Naive thymus-derived CD4-positive, alpha-beta T cell (primary cell): ENCODE measurements at regions of chr11 and their contacts with region 1.

Region 1: DNA sequence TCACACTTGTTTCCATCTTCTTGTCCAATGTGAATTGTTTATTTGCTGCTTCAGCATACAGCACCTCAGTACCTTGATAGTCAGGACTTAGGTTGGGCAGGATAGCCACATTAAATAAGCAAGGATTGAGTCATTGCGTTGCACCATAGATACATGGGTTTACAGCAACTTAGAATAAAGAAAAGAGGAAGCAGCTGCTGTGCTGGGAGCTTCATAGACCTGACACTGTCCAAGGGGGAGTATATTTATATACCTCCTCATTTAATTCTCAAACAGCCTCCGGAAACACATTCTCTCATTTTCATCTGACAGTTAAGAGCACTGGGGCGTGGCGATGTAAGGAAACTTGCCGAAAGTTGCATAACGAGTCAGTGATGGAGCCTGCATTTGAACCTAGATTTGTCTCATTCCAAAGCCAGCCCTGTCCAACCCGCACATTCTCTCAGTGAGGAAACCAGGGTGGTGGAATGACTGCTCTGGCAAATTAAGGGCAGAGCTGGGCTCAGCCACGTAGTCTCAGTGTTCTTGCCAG is 42.2 kb downstream of the UBASH3B start:
- DNase-seq: peak in 7 of 9 donors; percentile 53 to 78 (median 69)
- ATAC-seq: peak; percentile 85
- H3K4me3 ChIP-seq: peak overlapping the region; percentile 33
- H3K4me3 Mint-ChIP-seq: peak overlapping the region; percentile 61 to 93 (median 82)
- H3K27ac ChIP-seq: peak overlapping the region; percentile 75
- H3K27ac Mint-ChIP-seq: peak overlapping the region; percentile 88 to 99 (median 96)
- H3K4me1 ChIP-seq: peaks cover 34 to 62% of the 10 kb centered on the region in 2 donors
- H3K4me1 Mint-ChIP-seq: peaks cover 53 to 99% (median 88%) of the 10 kb centered on the region in 7 donors
- H3K27me3 ChIP-seq: no peaks in the 10 kb centered on the region
- H3K27me3 Mint-ChIP-seq: peaks cover 0 to 3% (median 0%) of the 10 kb centered on the region in 5 donors

Region 2: GRCh38 chr11:122628810-122629555 is 68.7 kb before region 1 on chr11:
- CTCF ChIA-PET with region 1: interaction called, 3 read pairs
- POLR2A ChIA-PET with region 1: no interaction called
- intact Hi-C with region 1: loop called (anchors 2 to 10 kb)
- DNase-seq: peak; percentile 46 to 70 (median 62)
- ATAC-seq: peak; percentile 93
- H3K4me3 ChIP-seq: no peak overlapping the region
- H3K4me3 Mint-ChIP-seq: no peak overlapping the region
- H3K27ac ChIP-seq: no peak overlapping the region
- H3K27ac Mint-ChIP-seq: peak overlapping the region in 4 of 9 donors; percentile 18 to 49 (median 24)
- H3K4me1 ChIP-seq: no peaks in the 10 kb centered on the region
- H3K4me1 Mint-ChIP-seq: peaks cover 0 to 30% (median 16%) of the 10 kb centered on the region in 7 donors
- H3K27me3 ChIP-seq: no peaks in the 10 kb centered on the region
- H3K27me3 Mint-ChIP-seq: peaks cover 0 to 16% (median 0%) of the 10 kb centered on the region in 5 donors

Region 3: GRCh38 chr11:122668562-122669090 is 29.1 kb before region 1 on chr11:
- CTCF ChIA-PET with region 1: interaction called, 29 read pairs
- POLR2A ChIA-PET with region 1: interaction called, 64 read pairs
- intact Hi-C with region 1: no loop called
- DNase-seq: peak in 6 of 9 donors; percentile 22 to 68 (median 52)
- ATAC-seq: peak; percentile 47
- H3K4me3 ChIP-seq: no peak overlapping the region
- H3K4me3 Mint-ChIP-seq: peak overlapping the region; percentile 9 to 77 (median 62)
- H3K27ac ChIP-seq: peak overlapping the region; percentile 55
- H3K27ac Mint-ChIP-seq: peak overlapping the region in 8 of 9 donors; percentile 79 to 99 (median 90)
- H3K4me1 ChIP-seq: peaks cover 45 to 53% of the 10 kb centered on the region in 2 donors
- H3K4me1 Mint-ChIP-seq: peaks cover 36 to 91% (median 77%) of the 10 kb centered on the region in 7 donors
- H3K27me3 ChIP-seq: no peaks in the 10 kb centered on the region
- H3K27me3 Mint-ChIP-seq: peaks cover 0 to 9% (median 0%) of the 10 kb centered on the region in 5 donors

Region 4: GRCh38 chr11:122711831-122712381 is 14.2 kb after region 1 on chr11:
- CTCF ChIA-PET with region 1: no interaction called
- POLR2A ChIA-PET with region 1: interaction called, 17 read pairs
- intact Hi-C with region 1: no loop called
- DNase-seq: no peak
- ATAC-seq: no peak
- H3K4me3 ChIP-seq: no peak overlapping the region
- H3K4me3 Mint-ChIP-seq: no peak overlapping the region
- H3K27ac ChIP-seq: no peak overlapping the region
- H3K27ac Mint-ChIP-seq: peak overlapping the region in 3 of 9 donors; percentile 45 to 54 (median 46)
- H3K4me1 ChIP-seq: peaks cover 2% of the 10 kb centered on the region in 2 donors
- H3K4me1 Mint-ChIP-seq: peaks cover 15 to 75% (median 64%) of the 10 kb centered on the region in 7 donors
- H3K27me3 ChIP-seq: no peaks in the 10 kb centered on the region
- H3K27me3 Mint-ChIP-seq: peaks cover 0 to 9% (median 0%) of the 10 kb centered on the region in 5 donors

Region 5: GRCh38 chr11:122727101-122727929 is 29.6 kb after region 1 on chr11:
- CTCF ChIA-PET with region 1: interaction called, 13 read pairs
- POLR2A ChIA-PET with region 1: interaction called, 37 read pairs
- intact Hi-C with region 1: loop called (anchors 1 kb)
- DNase-seq: peak in 7 of 9 donors; percentile 33 to 56 (median 48)
- ATAC-seq: peak; percentile 77
- H3K4me3 ChIP-seq: peak overlapping the region; percentile 37
- H3K4me3 Mint-ChIP-seq: peak overlapping the region; percentile 79 to 95 (median 85)
- H3K27ac ChIP-seq: peak overlapping the region; percentile 81
- H3K27ac Mint-ChIP-seq: peak overlapping the region; percentile 88 to 100 (median 97)
- H3K4me1 ChIP-seq: peaks cover 20 to 64% of the 10 kb centered on the region in 2 donors
- H3K4me1 Mint-ChIP-seq: peaks cover 53 to 73% (median 66%) of the 10 kb centered on the region in 7 donors
- H3K27me3 ChIP-seq: no peaks in the 10 kb centered on the region
- H3K27me3 Mint-ChIP-seq: no peaks in the 10 kb centered on the region

Region 6: DNA sequence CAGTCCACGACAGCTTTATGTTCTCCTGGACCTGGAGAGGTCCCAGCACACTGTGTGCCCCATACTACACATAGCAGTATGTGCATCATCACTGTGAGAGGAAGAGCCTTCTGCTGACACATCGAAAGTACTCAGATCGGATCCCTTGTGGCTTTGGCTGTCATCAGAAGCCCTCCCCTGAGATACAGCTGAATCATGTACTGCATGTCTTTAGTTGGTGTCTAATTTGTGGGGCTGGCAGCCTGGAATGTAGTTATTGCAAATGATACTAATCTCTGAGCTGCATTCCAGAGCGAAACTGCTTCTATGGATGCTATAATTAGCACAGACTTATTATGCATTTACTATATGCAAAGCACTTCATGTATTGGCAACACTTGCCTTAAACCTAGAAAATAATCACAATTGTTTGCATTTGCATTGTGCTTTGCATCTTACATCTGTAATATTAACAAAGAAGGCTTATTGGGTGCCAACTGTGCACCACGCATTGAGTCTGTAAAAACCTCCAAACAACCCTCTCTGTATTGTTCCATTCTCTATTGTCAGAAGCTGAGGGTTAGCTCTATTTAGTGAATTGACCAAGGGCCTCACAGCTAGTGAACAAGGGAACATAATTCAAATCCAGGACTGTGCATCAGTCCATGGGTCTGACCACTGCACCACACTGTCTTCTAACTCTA is 51.4 kb after region 1 on chr11:
- CTCF ChIA-PET with region 1: interaction called, 32 read pairs
- POLR2A ChIA-PET with region 1: interaction called, 99 read pairs
- intact Hi-C with region 1: loop called (anchors 1 to 2 kb)
- DNase-seq: peak in 5 of 9 donors; percentile 17 to 51 (median 28)
- ATAC-seq: peak; percentile 81
- H3K4me3 ChIP-seq: no peak overlapping the region
- H3K4me3 Mint-ChIP-seq: peak overlapping the region in 3 of 10 donors; percentile 8 to 45 (median 18)
- H3K27ac ChIP-seq: no peak overlapping the region
- H3K27ac Mint-ChIP-seq: peak overlapping the region in 2 of 9 donors; percentile 48 to 49
- H3K4me1 ChIP-seq: peaks cover 41 to 50% of the 10 kb centered on the region in 2 donors
- H3K4me1 Mint-ChIP-seq: peaks cover 4 to 70% (median 35%) of the 10 kb centered on the region in 7 donors
- H3K27me3 ChIP-seq: no peaks in the 10 kb centered on the region
- H3K27me3 Mint-ChIP-seq: peaks cover 0 to 13% (median 0%) of the 10 kb centered on the region in 5 donors